Aorta (tissue), 5 donors: ENCODE measurements at regions of chr4 and their contacts with region 1.

Region 1: GRCh38 chr4:75849461-75849860 is 52.8 kb downstream of the PPEF2 start:
- DNase-seq: no peak
- ATAC-seq: no peak
- H3K4me3 ChIP-seq: no peak overlapping the region
- H3K27ac ChIP-seq: no peak overlapping the region
- H3K4me1 ChIP-seq: no peaks in the 10 kb centered on the region
- H3K27me3 ChIP-seq: no peaks in the 10 kb centered on the region

Region 2: DNA sequence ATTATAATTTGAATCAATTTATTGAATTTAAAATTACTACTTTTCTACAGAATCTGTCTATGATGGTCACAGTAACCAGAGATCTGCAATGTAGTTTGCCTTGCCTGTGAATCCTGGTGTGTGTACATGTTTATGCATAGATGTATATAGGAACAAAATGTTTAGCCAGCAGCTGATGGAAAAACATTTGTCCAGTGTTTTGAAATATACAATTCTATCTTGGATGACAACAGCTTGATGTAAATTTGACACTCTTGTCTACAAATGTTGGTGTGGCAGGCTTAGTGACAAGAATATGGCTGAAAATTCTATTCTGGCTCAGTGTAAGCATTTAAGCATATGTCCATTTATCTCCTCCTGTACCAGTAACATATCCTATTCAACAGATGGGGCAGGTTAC is 564.6 kb before region 1 on chr4:
- intact Hi-C with region 1: no loop called
- DNase-seq: no peak
- ATAC-seq: no peak
- H3K4me3 ChIP-seq: no peak overlapping the region
- H3K27ac ChIP-seq: no peak overlapping the region
- H3K4me1 ChIP-seq: no peaks in the 10 kb centered on the region
- H3K27me3 ChIP-seq: no peaks in the 10 kb centered on the region

Region 3: DNA sequence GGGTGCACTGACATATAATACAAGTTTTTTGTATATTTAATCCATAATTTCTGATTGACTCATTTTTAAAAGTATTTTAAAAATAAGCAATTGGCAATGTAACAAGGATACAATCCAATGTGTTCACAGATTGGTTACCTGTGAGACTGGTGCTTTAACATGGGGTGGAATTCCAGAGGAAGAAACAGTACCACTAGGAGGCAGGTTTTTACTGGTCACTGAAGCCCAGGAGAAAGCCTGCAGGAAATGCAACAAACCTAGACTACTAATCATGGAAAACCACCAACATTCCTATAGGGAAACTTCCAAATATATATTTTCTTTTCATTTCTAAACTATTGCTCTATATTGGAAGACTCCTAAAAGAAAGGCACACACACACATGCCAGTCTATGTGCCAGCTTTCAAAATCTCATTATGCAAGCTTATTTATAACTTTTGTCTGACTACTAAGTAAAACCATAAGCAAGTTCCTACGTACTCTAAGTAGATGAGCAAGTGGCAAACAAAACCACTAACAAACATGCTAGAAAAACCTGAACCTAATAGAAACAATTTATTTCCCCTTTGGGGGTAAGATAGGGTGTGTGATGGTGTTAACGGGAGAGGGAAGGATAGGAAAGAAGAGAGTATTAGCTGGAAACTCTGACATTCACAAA is 195.5 kb before region 1 on chr4:
- intact Hi-C with region 1: loop called in 1 of 2 experiments (anchors 5 kb)
- DNase-seq: no peak
- ATAC-seq: no peak
- H3K4me3 ChIP-seq: no peak overlapping the region
- H3K27ac ChIP-seq: no peak overlapping the region
- H3K4me1 ChIP-seq: peaks cover 0 to 1% of the 10 kb centered on the region in 2 donors
- H3K27me3 ChIP-seq: no peaks in the 10 kb centered on the region

Region 4: DNA sequence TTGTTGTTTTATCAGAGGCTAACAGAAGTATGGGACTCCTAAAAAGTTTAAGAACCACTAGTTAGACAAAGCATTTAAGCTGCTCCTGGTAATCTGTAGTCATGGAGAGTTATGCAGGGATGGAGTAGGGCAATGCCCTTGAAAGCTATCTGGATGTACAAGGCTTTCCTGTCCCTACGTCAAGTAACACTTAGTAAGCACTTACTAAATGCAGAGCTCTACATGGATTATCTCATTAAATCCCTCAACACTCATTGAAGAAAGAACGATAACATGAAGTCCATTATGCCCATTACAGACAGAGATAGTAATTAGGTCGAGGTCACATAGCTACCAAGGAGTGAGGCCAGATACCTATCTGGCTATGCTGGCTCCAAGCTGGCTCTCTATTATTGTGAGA is 19.6 kb after region 1 on chr4:
- intact Hi-C with region 1: no loop called
- DNase-seq: no peak
- ATAC-seq: no peak
- H3K4me3 ChIP-seq: no peak overlapping the region
- H3K27ac ChIP-seq: no peak overlapping the region
- H3K4me1 ChIP-seq: no peaks in the 10 kb centered on the region
- H3K27me3 ChIP-seq: no peaks in the 10 kb centered on the region

Region 5: DNA sequence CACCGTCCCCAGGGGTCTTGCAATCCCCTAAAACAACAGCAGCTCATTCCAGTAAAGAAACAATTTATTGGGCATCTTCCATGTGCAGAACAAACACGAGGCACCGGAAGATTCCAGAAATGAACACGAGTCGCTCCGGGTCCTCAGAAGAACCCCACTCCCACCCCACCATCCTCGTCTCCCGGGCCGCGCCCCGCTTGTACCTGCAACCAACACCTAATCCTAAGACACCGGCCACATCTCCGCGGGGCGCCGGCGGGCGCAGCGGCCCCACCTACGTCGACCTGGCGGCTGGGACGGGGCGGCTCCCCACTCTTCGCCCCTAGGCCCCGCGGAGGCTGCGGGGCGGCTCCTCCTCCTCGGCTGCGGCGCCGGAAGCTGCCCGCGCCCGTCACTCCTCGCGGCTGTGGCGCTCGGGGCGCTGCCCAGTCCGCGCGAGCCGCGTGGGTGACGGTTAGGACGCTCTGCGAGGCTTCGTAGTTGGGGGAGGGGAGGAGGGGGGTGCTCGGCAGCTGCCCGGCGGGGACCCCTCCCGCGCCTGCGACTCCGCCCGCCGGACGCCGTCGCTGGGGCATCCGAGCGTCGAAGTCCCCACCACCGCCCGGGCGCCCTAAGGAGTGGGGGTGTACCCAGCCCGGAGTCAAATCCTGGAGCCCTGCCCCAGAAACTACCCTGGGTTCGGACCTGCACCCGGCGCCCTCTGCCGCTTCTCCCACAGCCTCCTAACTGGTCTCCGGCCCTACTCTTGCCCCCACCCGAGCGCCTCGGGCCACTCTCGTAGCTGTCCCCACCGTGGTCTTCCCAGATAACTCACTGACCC is 571.5 kb after region 1 on chr4 and contains the start of gene CCDC158:
- intact Hi-C with region 1: no loop called
- DNase-seq: peak; percentile 50 to 83
- ATAC-seq: peak; percentile 91
- H3K4me3 ChIP-seq: peak within 1 kb of the TSS; percentile 65 to 82
- H3K27ac ChIP-seq: no peak within 1 kb of the TSS
- H3K4me1 ChIP-seq: no peaks in the 10 kb centered on the region
- H3K27me3 ChIP-seq: no peaks in the 10 kb centered on the region
- total RNA-seq, gene CCDC158: 1.6 to 1.9 TPM